ENCODE measurements at regions of chr2 and their contacts with region 1.

Region 1: DNA sequence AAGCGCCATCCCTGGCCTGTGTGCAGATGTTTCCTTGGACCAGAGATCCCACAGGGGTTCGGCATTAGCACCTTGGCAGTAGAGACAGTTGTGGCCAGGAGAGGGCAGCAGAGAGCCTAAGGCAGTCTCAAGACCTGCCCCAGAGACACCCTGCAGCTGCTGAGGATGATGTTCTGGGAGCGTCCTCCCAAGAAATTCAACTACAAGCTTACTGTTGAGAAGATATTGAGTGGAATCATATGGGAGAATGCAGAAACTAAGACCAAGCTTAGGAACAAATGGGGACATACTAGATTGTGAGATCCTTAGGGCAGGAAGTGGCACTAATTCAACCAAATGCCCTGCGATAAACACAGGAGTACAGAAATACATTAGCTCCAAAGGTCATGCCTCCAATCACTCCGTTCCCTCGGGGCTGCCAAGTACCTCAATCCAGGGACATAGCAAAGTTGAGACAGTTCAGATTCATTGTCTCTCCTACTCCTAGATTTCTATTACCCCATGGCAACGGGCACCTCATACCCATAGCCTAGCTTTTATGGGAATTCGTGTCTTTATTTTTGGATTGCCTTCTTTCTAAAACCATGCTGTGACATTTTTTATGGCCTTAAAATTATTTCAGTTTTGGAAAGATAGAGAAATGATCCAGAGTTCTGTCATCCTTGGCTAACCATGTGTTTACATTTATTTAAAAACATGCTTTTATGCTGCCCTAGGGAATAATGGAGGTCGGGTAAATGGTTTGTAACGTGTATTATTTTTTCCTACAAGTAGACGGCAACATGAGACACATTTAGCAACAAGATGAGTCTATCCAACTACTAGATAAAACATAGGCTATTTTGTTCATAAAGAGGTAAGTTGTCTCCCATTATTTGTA is 2.2 kb upstream of the ERMN start:
- DNase-seq: peak; percentile 95
- H3K4me3 Mint-ChIP-seq: peak overlapping the region; percentile 52
- H3K27ac Mint-ChIP-seq: peak overlapping the region; percentile 82
- H3K4me1 Mint-ChIP-seq: peaks cover 63% of the 10 kb centered on the region
- H3K27me3 Mint-ChIP-seq: no peaks in the 10 kb centered on the region

Region 2: GRCh38 chr2:157349949-157350515 is 22.2 kb after region 1 on chr2:
- CTCF ChIA-PET with region 1: interaction called, 11 read pairs
- intact Hi-C with region 1: no loop called
- DNase-seq: no peak
- H3K4me3 Mint-ChIP-seq: no peak overlapping the region
- H3K27ac Mint-ChIP-seq: no peak overlapping the region
- H3K4me1 Mint-ChIP-seq: peaks cover 49% of the 10 kb centered on the region
- H3K27me3 Mint-ChIP-seq: no peaks in the 10 kb centered on the region

Region 3: GRCh38 chr2:157413326-157414035 is 85.6 kb after region 1 on chr2:
- CTCF ChIA-PET with region 1: interaction called, 43 read pairs
- intact Hi-C with region 1: loop called (anchors 1 kb)
- DNase-seq: peak; percentile 78
- H3K4me3 Mint-ChIP-seq: peak overlapping the region; percentile 64
- H3K27ac Mint-ChIP-seq: peak overlapping the region; percentile 99
- H3K4me1 Mint-ChIP-seq: peaks cover 90% of the 10 kb centered on the region
- H3K27me3 Mint-ChIP-seq: no peaks in the 10 kb centered on the region

Region 4: GRCh38 chr2:157433394-157433793 is 105.5 kb after region 1 on chr2:
- CTCF ChIA-PET with region 1: interaction called, 40 read pairs
- intact Hi-C with region 1: no loop called
- DNase-seq: no peak
- H3K4me3 Mint-ChIP-seq: peak overlapping the region; percentile 75
- H3K27ac Mint-ChIP-seq: peak overlapping the region; percentile 100
- H3K4me1 Mint-ChIP-seq: peaks cover 62% of the 10 kb centered on the region
- H3K27me3 Mint-ChIP-seq: no peaks in the 10 kb centered on the region

Region 5: DNA sequence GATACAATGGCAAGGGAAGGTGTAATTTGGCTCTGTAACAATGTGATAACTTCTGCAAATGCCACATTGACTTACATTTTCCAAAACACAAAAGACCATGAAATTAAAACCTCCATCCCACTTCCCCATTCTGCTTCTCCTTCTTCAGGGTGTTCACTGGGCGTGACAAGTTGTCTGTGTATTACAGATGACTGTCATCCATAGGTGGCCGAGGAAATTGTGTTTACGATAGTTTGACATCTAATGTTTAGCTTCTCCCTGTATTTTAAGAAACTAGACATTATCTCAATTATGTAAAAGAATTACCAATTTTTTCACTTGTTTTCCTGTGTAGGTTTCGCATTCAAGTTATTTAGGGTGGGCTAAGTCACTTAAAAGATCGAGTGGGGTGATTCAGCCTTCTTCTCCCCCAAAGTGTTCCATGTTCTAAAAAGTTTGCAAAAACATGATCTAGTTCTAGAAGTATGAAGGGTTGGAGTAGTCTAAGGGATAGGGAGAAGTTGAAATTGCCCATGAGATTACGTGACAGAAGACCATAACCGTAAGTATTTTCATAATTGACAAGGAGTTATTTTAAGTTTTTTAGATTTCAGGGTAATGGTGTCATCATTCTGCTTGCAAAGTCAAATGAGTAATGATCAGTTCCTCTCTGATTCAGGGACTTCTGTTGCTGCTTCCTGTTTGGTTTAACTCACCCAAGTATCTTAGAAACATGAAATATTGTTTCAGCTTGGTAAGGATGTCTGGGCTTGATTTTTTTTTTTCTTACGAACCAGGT is 141.3 kb after region 1 on chr2:
- CTCF ChIA-PET with region 1: interaction called, 6 read pairs
- intact Hi-C with region 1: loop called (anchors 1 kb)
- DNase-seq: peak; percentile 27
- H3K4me3 Mint-ChIP-seq: peak overlapping the region; percentile 64
- H3K27ac Mint-ChIP-seq: peak overlapping the region; percentile 99
- H3K4me1 Mint-ChIP-seq: peaks cover 94% of the 10 kb centered on the region
- H3K27me3 Mint-ChIP-seq: no peaks in the 10 kb centered on the region

Region 6: DNA sequence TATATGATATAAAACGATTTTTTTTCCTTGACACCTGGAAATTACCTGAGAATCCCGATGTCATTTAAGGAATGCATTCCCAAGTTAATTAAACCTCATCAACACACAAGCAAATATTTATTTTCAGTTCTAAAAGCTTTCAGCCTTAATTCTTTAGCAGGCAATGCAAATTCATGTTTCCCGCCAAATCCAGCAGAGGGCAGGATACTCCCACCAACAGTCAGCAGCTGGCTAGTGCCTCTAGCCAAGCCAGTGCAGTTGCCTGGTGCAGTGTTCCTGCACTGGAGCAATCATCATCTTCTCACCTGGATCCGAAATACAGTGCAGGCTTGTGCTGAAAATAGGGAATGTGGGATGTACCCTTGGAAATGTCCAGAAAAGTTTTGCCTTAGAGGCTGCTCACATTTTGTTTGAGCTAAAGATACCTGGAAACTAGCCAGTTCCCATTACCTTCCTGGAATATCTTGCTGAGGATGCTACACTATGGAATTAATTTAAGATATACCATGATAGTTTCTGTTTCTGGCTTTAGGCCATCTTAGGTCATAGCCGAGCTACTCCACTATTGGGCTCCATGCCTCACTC is 164.4 kb after region 1 on chr2:
- CTCF ChIA-PET with region 1: interaction called, 60 read pairs
- intact Hi-C with region 1: loop called (anchors 1 kb)
- DNase-seq: peak; percentile 89
- H3K4me3 Mint-ChIP-seq: no peak overlapping the region
- H3K27ac Mint-ChIP-seq: no peak overlapping the region
- H3K4me1 Mint-ChIP-seq: peaks cover 62% of the 10 kb centered on the region
- H3K27me3 Mint-ChIP-seq: no peaks in the 10 kb centered on the region